GM10248 (cell line): ENCODE measurements at regions of chr10 and their contacts with region 1.

Region 1: GRCh38 chr10:22228943-22229801 is 11.4 kb upstream of the EBLN1 start:
- DNase-seq: peak; percentile 84
- CTCF ChIP-seq: no peak

Region 2: DNA sequence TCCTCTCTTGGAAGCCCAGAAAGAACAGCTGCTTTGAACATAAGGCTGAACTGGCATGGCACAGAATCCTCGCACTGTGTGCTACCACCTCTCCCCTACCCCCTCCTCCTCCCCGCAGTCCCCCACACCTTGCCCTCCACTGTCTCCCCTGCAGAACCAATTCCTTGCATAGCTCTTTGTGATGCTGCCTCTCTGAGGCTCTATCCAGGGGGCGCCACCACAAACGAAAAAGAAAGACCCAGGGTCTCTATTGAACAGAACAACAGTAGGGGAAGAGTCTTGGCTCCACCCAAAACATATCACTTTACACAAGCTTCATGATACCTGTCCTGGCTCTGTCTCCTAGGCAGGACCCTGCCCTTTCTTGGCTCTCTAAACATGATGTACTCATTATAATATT is 14.8 kb after region 1 on chr10:
- CTCF ChIA-PET with region 1: interaction called, 15 read pairs
- POLR2A ChIA-PET with region 1: no interaction called
- DNase-seq: no peak
- CTCF ChIP-seq: peak; percentile 8